CD4-positive, alpha-beta memory T cell (primary cell): ENCODE measurements at regions of chr14 and their contacts with region 1.

Region 1: DNA sequence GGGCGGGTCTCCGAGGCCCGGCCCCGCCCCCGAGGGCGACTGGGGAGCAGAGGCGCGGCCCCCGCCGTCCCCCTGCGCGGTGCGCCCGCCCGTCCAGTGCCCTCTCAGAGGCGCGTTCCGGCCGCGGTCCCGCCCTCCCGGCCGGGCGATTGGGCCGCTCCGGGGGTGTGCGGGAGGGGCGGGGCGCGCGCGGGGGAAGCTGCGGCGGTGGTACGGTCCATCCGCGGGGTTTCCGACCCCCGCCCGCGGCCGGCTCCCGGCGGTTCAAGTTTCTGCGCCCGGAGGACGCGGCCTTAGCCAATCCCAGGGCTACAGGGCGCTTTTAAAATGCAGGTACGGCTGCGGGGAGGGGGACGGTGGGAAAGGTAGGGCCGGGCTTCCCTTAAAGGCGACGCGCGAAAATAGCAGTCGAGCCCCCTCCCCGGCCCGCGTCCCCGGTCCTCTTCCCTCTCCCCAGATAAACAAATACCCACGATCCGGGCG is 317 bp upstream of the CCDC85C start:
- DNase-seq: peak; percentile 92 to 99 (median 98)
- H3K4me3 ChIP-seq: peak overlapping the region; percentile 47 to 84
- H3K4me3 Mint-ChIP-seq: peak overlapping the region; percentile 88 to 95 (median 93)
- H3K27ac ChIP-seq: peak overlapping the region; percentile 84
- H3K27ac Mint-ChIP-seq: peak overlapping the region; percentile 84 to 94 (median 88)
- H3K4me1 ChIP-seq: peaks cover 43% of the 10 kb centered on the region
- H3K4me1 Mint-ChIP-seq: peaks cover 21 to 47% (median 35%) of the 10 kb centered on the region in 4 donors
- H3K27me3 ChIP-seq: no peaks in the 10 kb centered on the region
- H3K27me3 Mint-ChIP-seq: no peaks in the 10 kb centered on the region

Region 2: DNA sequence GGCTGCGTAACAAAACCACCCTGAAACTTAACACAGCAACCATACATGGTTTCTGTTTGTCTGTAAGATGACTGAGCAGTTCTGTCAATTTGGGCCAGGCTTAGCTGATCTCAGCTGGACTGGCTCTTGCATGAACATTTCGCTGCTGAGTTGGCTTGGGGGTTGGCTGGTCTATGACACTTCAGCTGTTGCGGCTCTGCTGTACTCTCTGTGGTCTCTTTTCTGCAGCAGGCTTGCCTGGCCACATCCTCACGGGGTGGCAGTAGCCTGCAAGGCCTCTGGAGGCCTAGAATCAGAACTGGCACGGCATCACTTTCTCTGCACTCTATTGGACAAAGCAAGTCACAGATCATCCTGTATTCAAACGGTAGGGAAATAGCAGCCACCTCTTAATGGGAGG is 548.5 kb before region 1 on chr14:
- CTCF ChIA-PET with region 1: no interaction called
- POLR2A ChIA-PET with region 1: no interaction called
- intact Hi-C with region 1: no loop called
- DNase-seq: peak; percentile 26 to 49 (median 44)
- H3K4me3 ChIP-seq: no peak overlapping the region
- H3K4me3 Mint-ChIP-seq: peak overlapping the region in 4 of 8 donors; percentile 16 to 29 (median 17)
- H3K27ac ChIP-seq: no peak overlapping the region
- H3K27ac Mint-ChIP-seq: peak overlapping the region in 6 of 7 donors; percentile 17 to 76 (median 48)
- H3K4me1 ChIP-seq: peaks cover 7% of the 10 kb centered on the region
- H3K4me1 Mint-ChIP-seq: peaks cover 8 to 14% (median 11%) of the 10 kb centered on the region in 4 donors
- H3K27me3 ChIP-seq: no peaks in the 10 kb centered on the region
- H3K27me3 Mint-ChIP-seq: no peaks in the 10 kb centered on the region

Region 3: GRCh38 chr14:99374964-99375363 is 229.4 kb before region 1 on chr14:
- CTCF ChIA-PET with region 1: no interaction called
- POLR2A ChIA-PET with region 1: no interaction called
- intact Hi-C with region 1: no loop called
- DNase-seq: no peak
- H3K4me3 ChIP-seq: no peak overlapping the region
- H3K4me3 Mint-ChIP-seq: no peak overlapping the region
- H3K27ac ChIP-seq: no peak overlapping the region
- H3K27ac Mint-ChIP-seq: no peak overlapping the region
- H3K4me1 ChIP-seq: no peaks in the 10 kb centered on the region
- H3K4me1 Mint-ChIP-seq: no peaks in the 10 kb centered on the region
- H3K27me3 ChIP-seq: no peaks in the 10 kb centered on the region
- H3K27me3 Mint-ChIP-seq: peaks cover 12 to 14% of the 10 kb centered on the region in 2 donors

Region 4: GRCh38 chr14:99480917-99481744 is 123.2 kb before region 1 on chr14 and contains the start of gene CCNK:
- CTCF ChIA-PET with region 1: no interaction called
- POLR2A ChIA-PET with region 1: interaction called, 41 read pairs
- intact Hi-C with region 1: loop called (anchors 1 kb)
- DNase-seq: peak; percentile 100
- H3K4me3 ChIP-seq: peak within 1 kb of the TSS; percentile 88 to 97
- H3K4me3 Mint-ChIP-seq: peak within 1 kb of the TSS; percentile 94 to 99 (median 98)
- H3K27ac ChIP-seq: peak within 1 kb of the TSS; percentile 98
- H3K27ac Mint-ChIP-seq: peak within 1 kb of the TSS; percentile 98 to 99 (median 99)
- H3K4me1 ChIP-seq: peaks cover 68% of the 10 kb centered on the region
- H3K4me1 Mint-ChIP-seq: peaks cover 39 to 80% (median 60%) of the 10 kb centered on the region in 4 donors
- H3K27me3 ChIP-seq: no peaks in the 10 kb centered on the region
- H3K27me3 Mint-ChIP-seq: no peaks in the 10 kb centered on the region
- total RNA-seq, gene CCNK: 77.1 to 83.4 TPM

Region 5: DNA sequence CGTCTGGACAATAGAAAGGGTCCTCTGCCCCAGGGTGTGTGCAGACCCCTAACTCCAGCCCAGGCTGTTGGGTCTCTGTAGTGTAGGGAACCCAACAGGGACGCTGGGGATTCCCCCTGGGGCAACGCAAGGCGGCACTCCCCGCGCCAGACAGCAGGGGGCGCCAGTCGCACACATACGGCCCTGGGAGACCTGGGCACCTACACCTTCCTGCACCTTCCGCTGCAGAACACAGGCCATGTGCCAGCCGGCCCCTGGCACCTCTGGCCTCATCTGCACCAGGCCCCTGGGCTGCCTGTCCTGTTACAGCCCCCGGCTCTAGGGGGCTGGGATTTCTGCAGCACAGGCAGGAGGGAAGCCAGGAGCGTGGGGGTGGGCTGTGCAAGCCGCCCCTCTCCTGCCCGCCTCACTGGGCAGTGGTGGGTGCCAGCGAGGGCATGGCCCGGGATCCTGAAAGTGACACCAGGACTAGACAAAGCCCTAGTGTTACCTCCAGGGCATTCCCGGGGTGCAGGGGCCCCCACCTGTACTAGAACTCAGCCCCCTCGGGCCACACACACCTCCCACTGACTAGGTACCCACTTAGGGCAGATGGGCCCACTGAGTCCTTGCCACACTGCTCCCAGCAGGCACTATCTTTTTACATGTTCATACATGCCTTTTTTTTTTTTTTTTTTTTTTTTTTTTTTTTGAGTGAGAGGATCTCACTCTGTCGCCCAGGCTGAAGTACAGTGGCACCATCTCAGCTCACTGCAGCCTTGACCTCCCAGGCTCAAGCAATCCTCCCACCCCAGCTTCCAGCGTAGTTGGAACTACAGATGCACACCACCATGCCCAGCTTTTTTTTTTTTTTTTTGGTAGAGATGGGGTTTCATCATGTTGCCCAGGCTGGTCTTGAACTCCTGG is 85.6 kb before region 1 on chr14:
- CTCF ChIA-PET with region 1: interaction called, 4 read pairs
- POLR2A ChIA-PET with region 1: no interaction called
- intact Hi-C with region 1: loop called (anchors 2 kb)
- DNase-seq: peak; percentile 75 to 83 (median 78)
- H3K4me3 ChIP-seq: no peak overlapping the region
- H3K4me3 Mint-ChIP-seq: no peak overlapping the region
- H3K27ac ChIP-seq: no peak overlapping the region
- H3K27ac Mint-ChIP-seq: peak overlapping the region in 1 of 7 donors; percentile 24
- H3K4me1 ChIP-seq: no peaks in the 10 kb centered on the region
- H3K4me1 Mint-ChIP-seq: no peaks in the 10 kb centered on the region
- H3K27me3 ChIP-seq: no peaks in the 10 kb centered on the region
- H3K27me3 Mint-ChIP-seq: no peaks in the 10 kb centered on the region

Region 6: DNA sequence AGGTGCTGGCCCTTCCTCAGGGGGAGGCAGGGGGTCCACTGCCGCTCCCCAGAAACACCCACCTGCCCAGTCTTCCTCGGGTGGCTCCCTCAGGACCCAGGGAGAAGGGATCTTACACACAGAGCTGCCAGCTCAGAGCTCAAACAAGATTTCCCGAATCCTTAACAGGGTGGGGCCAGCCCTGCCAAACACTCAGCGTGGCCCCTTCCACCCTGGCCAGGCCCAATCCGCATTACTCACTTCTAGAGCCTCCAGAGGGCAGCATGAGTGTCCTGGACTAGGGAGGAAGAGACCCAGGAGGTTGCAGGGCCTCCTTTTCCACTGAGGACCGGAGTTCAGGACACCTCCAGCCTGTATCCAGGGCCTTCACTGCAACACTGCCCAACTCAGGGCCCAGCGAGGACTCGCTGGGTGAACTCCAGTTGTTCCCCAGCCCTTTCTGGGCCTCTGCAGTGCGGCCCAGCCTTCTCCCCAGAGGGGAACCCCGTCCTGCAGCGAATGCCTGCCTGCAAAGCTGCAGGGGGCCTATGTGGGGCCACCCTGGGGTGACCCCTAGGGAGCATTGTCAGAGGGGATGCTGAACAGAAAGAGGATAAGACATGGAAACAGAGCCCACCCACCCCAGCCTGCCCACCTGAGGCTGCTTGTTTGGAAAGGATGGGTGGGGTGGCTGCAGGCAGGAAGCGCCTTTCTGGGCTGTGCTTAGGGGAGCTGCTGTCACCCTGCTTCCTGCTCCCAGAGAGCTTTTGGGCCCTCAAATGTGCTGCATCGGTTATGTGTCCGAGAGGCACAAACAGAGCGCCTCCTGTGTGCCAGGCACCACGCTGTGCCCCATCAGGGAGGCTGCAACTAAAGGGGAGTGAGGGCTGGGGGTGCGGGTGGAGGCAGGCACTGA is 79.3 kb before region 1 on chr14:
- CTCF ChIA-PET with region 1: interaction called, 8 read pairs
- POLR2A ChIA-PET with region 1: interaction called, 18 read pairs
- intact Hi-C with region 1: no loop called
- DNase-seq: peak in 4 of 5 donors; percentile 8 to 30 (median 24)
- H3K4me3 ChIP-seq: no peak overlapping the region
- H3K4me3 Mint-ChIP-seq: peak overlapping the region; percentile 51 to 83 (median 70)
- H3K27ac ChIP-seq: no peak overlapping the region
- H3K27ac Mint-ChIP-seq: peak overlapping the region; percentile 15 to 95 (median 93)
- H3K4me1 ChIP-seq: peaks cover 20% of the 10 kb centered on the region
- H3K4me1 Mint-ChIP-seq: peaks cover 5 to 22% (median 12%) of the 10 kb centered on the region in 4 donors
- H3K27me3 ChIP-seq: no peaks in the 10 kb centered on the region
- H3K27me3 Mint-ChIP-seq: no peaks in the 10 kb centered on the region

Region 7: GRCh38 chr14:99683619-99684355 is 79.5 kb after region 1 on chr14 and contains the start of gene CYP46A1:
- CTCF ChIA-PET with region 1: interaction called, 3 read pairs
- POLR2A ChIA-PET with region 1: interaction called, 13 read pairs
- intact Hi-C with region 1: loop called (anchors 1 kb)
- DNase-seq: peak; percentile 98 to 100 (median 99)
- H3K4me3 ChIP-seq: peak within 1 kb of the TSS; percentile 86 to 92
- H3K4me3 Mint-ChIP-seq: peak within 1 kb of the TSS; percentile 86 to 97 (median 94)
- H3K27ac ChIP-seq: peak within 1 kb of the TSS; percentile 71
- H3K27ac Mint-ChIP-seq: peak within 1 kb of the TSS; percentile 92 to 96 (median 93)
- H3K4me1 ChIP-seq: peaks cover 19% of the 10 kb centered on the region
- H3K4me1 Mint-ChIP-seq: peaks cover 4 to 19% (median 12%) of the 10 kb centered on the region in 4 donors
- H3K27me3 ChIP-seq: no peaks in the 10 kb centered on the region
- H3K27me3 Mint-ChIP-seq: peaks cover 3 to 6% of the 10 kb centered on the region in 2 donors
- total RNA-seq, gene CYP46A1: 0.15 to 0.36 TPM

Region 8: DNA sequence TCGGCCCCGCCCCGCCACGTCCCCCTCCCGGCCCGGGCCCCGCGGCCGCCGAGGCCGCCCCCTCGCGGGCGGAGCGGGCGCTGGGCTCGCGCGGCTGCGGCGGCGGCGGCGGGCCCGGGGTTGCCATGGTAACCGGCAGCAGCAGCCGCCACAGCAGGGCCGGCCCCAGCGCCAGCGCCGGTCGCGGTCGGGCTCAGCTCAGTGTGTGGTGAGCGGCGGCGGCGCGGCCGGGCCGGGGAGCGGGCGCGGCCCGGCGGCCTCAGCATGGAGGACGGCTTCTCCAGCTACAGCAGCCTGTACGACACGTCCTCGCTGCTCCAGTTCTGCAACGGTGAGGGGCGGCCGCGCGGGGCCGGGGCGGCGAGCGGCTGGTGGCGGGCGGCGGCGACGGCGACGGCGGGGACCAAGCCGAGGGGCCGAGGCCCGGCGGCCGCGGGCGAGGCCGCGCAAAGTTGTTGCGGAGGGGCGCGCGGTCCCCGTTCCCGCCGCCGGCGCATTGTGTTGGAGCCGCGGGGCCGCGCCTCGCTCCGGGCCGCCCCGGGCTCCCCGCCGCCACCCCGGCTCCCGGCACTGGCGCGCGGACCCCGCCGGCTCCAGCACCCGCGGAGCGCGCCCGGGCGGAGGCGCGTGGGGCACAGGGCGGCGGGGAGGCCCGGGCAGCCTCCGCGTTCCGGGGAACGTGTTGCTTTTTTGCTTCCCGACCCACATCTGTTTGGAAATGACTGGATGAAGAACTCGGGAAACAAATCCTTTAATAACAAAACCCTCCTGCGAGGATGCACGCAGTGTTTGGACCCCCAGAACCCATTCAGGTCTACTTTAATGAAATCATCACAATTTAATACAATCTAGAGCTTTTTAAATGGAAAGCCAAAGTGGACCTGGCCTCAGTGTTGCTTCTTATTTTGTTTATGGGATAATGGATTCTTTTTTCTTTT is 189.2 kb after region 1 on chr14 and contains the start of gene EML1:
- CTCF ChIA-PET with region 1: no interaction called
- POLR2A ChIA-PET with region 1: interaction called, 3 read pairs
- intact Hi-C with region 1: loop called (anchors 10 kb)
- DNase-seq: peak; percentile 55 to 79 (median 75)
- H3K4me3 ChIP-seq: no peak within 1 kb of the TSS
- H3K4me3 Mint-ChIP-seq: peak within 1 kb of the TSS; percentile 69 to 89 (median 80)
- H3K27ac ChIP-seq: no peak within 1 kb of the TSS
- H3K27ac Mint-ChIP-seq: peak within 1 kb of the TSS; percentile 14 to 80 (median 50)
- H3K4me1 ChIP-seq: peaks cover 7% of the 10 kb centered on the region
- H3K4me1 Mint-ChIP-seq: peaks cover 5 to 19% (median 12%) of the 10 kb centered on the region in 4 donors
- H3K27me3 ChIP-seq: peaks cover 11% of the 10 kb centered on the region
- H3K27me3 Mint-ChIP-seq: peaks cover 6 to 7% of the 10 kb centered on the region in 2 donors
- total RNA-seq, gene EML1: 0.22 to 0.23 TPM

Region 9: DNA sequence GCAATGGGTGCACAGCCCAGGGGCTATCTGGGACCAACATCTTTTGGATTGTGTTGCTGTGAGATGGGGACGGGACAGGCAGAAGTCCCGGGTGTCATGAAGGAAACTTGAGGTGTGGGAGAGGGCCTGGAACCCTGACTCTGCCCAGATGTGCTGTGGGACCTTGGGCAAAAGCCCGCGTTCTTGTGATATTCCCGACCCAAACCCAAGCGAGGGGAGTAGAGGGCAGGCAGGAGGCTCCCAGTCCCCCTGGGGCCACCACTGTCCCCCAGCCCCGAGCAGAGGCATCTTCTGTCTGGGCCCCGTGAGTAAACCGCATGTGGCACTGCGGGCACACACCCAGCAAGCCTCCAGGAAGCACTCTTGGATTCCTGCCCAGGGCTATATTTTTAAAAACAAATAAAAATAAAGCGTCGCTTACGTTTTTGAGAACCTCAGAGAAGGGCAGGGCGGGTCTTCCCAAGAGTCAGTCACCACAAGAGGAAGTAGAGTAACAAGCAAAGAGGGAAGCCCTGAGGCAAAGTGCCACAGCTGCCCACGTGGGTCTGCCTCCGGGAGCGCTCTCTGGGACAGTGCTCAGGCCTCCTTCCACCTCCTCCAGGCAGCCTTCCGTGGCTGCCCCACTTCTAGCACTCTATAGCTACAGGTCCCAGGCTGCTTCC is 943.4 kb after region 1 on chr14:
- CTCF ChIA-PET with region 1: no interaction called
- POLR2A ChIA-PET with region 1: no interaction called
- intact Hi-C with region 1: loop called (anchors 5 kb)
- DNase-seq: peak; percentile 29 to 90 (median 79)
- H3K4me3 ChIP-seq: no peak overlapping the region
- H3K4me3 Mint-ChIP-seq: peak overlapping the region; percentile 44 to 85 (median 82)
- H3K27ac ChIP-seq: peak overlapping the region; percentile 59
- H3K27ac Mint-ChIP-seq: peak overlapping the region; percentile 32 to 95 (median 91)
- H3K4me1 ChIP-seq: peaks cover 41% of the 10 kb centered on the region
- H3K4me1 Mint-ChIP-seq: peaks cover 9 to 49% (median 18%) of the 10 kb centered on the region in 4 donors
- H3K27me3 ChIP-seq: no peaks in the 10 kb centered on the region
- H3K27me3 Mint-ChIP-seq: no peaks in the 10 kb centered on the region